ENCODE measurements at regions of chrX and their contacts with region 1.

Region 1: GRCh38 chrX:74280759-74281158 is 23.2 kb upstream of the ZCCHC13 start:
- H3K4me3 ChIP-seq: no peak overlapping the region
- H3K27ac ChIP-seq: no peak overlapping the region
- H3K4me1 ChIP-seq: no peaks in the 10 kb centered on the region
- CTCF ChIP-seq: no peak

Region 2: DNA sequence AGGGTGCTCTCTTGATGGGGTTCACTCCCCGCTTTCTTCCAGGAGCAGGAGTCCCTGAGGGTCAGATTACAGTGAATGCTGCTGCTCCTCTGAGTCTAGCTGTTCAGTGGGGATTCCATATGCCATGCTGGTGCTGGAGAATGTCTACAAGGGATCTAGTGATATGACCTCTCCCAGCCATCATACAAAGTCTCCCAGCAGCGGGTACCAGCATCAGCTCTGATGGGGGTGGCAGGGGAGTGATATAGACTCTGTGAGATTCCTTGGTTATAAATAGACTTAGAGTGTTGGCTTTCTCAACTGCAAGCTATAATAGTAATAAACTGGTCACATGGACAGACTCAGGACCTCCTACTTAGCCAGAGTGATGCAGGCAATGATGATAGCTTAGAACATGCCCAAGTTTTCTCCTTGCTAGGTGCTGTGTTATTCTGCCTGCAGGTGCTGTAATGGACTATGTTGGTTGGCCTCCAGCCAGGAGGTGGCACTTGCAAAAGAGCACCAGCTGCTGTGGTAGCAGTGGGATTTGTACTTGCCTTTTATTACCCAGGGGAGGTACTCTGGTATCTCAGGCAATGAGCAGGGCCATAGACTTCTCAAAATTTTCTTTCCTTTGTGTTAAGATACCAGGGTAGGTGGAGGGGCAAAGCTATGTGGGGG is 514.9 kb before region 1 on chrX:
- CTCF ChIA-PET with region 1: no interaction called
- POLR2A ChIA-PET with region 1: no interaction called
- H3K4me3 ChIP-seq: no peak overlapping the region
- H3K27ac ChIP-seq: no peak overlapping the region
- H3K4me1 ChIP-seq: peaks cover 3% of the 10 kb centered on the region
- CTCF ChIP-seq: no peak

Region 3: DNA sequence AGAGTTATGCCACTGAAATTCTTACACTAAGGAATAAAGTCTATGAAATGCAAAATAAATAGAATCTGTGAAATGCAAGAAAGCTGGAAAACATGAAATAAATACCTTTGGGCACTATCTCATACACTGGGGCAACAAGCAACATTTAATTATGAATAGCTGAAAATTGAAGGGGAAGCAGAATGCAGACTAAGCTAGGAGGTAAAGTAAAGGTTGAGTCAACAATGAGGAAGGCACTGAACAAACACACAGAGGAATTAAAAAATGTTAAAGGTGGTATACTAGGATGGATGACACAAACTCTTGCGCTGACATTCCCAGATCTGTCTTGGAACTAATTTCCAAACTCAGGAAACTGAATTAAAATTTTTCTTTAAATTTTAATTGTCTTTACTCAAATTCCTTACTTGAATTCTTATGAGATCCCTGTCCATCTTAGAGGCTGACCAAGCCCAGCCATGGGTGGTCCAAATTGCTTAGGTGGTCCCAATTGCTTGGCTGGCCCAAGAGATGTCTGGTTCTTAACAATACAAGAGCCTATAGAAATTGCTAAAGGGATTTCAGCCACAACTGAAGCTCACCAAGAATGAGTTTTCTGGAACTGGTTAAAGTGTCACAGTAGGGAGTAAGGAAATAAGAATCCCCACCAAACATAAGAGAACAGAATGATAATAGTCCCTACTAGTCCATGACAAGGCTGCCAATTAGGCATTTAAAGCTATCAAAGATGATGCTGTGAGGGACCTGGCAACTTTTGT is 18.1 kb before region 1 on chrX:
- CTCF ChIA-PET with region 1: interaction called, 5 read pairs
- POLR2A ChIA-PET with region 1: interaction called, 13 read pairs
- H3K4me3 ChIP-seq: no peak overlapping the region
- H3K27ac ChIP-seq: no peak overlapping the region
- H3K4me1 ChIP-seq: no peaks in the 10 kb centered on the region
- CTCF ChIP-seq: no peak